ENCODE measurements at regions of chr2 and their contacts with region 1.

Region 1: GRCh38 chr2:222813177-222813843 is 47.5 kb upstream of the ACSL3 start:
- DNase-seq: no peak
- ATAC-seq: no peak
- H3K4me3 ChIP-seq: no peak overlapping the region
- H3K27ac ChIP-seq: no peak overlapping the region
- H3K4me1 ChIP-seq: no peaks in the 10 kb centered on the region
- H3K27me3 ChIP-seq: no peaks in the 10 kb centered on the region

Region 2: GRCh38 chr2:222854773-222855700 is 41.7 kb after region 1 on chr2:
- intact Hi-C with region 1: loop called in 1 of 4 experiments (anchors 5 kb)
- DNase-seq: no peak
- ATAC-seq: peak; percentile 24 to 88
- H3K4me3 ChIP-seq: no peak overlapping the region
- H3K27ac ChIP-seq: no peak overlapping the region
- H3K4me1 ChIP-seq: no peaks in the 10 kb centered on the region
- H3K27me3 ChIP-seq: no peaks in the 10 kb centered on the region